Spleen (tissue), 13 donors: ENCODE measurements at regions of chr17 and their contacts with region 1.

Region 1: DNA sequence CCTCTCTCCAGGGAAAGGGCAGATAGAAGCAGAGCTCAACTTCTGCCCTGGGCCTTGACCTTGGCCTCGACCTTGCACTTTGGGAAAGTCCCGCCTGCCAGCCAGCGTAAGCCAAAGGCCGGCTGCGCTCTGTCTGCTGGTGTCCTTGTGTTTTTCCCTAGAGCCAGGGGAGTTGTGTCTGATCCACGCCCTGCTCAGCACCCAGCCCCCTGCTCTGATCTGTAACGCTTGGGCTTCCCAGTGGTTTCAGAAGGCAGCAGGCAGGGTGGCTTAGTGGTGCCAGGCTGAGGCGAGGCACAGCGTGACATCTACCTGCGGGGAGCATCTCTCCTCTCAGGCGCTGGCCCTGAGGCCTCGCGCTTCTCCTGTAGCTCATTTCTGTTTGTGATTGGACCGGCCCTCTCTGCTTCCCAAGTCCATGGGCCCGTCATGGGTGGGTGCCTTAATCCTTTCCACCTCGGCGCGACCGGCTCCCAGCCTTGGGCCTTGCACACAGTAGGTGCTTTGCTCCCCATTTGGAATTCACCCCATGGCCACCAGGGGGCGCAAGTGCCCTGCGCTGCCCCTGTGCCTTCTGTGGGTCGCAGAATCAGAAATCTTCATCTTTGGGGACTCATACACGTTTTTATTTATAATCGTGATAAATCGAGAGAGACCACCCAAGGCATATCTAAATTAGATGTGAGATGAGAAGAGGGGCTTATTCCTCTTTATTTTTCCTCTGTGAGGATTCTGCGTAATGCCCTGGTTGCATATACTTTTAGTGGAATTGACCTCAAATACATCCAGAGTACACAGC is 24.2 kb downstream of the SGSH start:
- DNase-seq: peak; percentile 79
- H3K4me3 ChIP-seq: no peak overlapping the region
- H3K27ac ChIP-seq: no peak overlapping the region
- H3K4me1 ChIP-seq: peaks cover 0 to 32% (median 5%) of the 10 kb centered on the region in 6 donors
- H3K27me3 ChIP-seq: peaks cover 0 to 24% (median 0%) of the 10 kb centered on the region in 7 donors
- CTCF ChIP-seq: peak; percentile 62 to 96 (median 91)
- POLR2A ChIP-seq: no peak

Region 2: GRCh38 chr17:80254396-80255251 is 58.7 kb after region 1 on chr17:
- intact Hi-C with region 1: loop called (anchors 5 kb)
- DNase-seq: no peak
- H3K4me3 ChIP-seq: peak overlapping the region in 2 of 8 donors; percentile 5 to 39
- H3K27ac ChIP-seq: peak overlapping the region; percentile 70 to 98 (median 82)
- H3K4me1 ChIP-seq: peaks cover 4 to 55% (median 47%) of the 10 kb centered on the region in 6 donors
- H3K27me3 ChIP-seq: no peaks in the 10 kb centered on the region
- CTCF ChIP-seq: no peak
- POLR2A ChIP-seq: no peak

Region 3: DNA sequence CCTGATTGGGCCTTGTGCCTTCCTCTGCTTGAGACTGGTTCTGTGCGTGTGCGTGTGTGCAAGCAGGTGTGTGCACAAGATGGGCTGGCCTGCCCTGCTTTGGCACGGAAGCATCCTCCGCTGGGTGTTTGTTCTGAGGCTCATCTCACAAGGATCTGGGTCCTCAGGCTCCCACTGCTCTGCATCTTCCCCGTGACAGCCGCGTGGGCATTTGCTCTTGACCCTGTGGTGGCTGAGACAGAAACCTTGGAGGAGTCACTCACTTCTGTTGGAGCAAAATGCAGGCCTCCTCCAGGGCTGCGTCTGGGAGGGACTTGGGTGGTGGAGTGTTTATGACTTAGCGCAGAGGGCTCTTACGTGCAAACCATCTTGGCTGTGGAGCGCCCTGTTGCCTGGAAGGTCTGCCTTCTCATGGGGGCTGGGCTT is 467.9 kb after region 1 on chr17:
- intact Hi-C with region 1: no loop called
- DNase-seq: no peak
- H3K4me3 ChIP-seq: no peak overlapping the region
- H3K27ac ChIP-seq: peak overlapping the region in 4 of 8 donors; percentile 1 to 27 (median 18)
- H3K4me1 ChIP-seq: peaks cover 11 to 58% (median 19%) of the 10 kb centered on the region in 6 donors
- H3K27me3 ChIP-seq: no peaks in the 10 kb centered on the region
- CTCF ChIP-seq: no peak
- POLR2A ChIP-seq: no peak